ENCODE measurements at regions of chr12 and their contacts with region 1.

Region 1: GRCh38 chr12:123580772-123581171 is 3.6 kb upstream of the TMED2 start:
- DNase-seq: no peak

Region 2: DNA sequence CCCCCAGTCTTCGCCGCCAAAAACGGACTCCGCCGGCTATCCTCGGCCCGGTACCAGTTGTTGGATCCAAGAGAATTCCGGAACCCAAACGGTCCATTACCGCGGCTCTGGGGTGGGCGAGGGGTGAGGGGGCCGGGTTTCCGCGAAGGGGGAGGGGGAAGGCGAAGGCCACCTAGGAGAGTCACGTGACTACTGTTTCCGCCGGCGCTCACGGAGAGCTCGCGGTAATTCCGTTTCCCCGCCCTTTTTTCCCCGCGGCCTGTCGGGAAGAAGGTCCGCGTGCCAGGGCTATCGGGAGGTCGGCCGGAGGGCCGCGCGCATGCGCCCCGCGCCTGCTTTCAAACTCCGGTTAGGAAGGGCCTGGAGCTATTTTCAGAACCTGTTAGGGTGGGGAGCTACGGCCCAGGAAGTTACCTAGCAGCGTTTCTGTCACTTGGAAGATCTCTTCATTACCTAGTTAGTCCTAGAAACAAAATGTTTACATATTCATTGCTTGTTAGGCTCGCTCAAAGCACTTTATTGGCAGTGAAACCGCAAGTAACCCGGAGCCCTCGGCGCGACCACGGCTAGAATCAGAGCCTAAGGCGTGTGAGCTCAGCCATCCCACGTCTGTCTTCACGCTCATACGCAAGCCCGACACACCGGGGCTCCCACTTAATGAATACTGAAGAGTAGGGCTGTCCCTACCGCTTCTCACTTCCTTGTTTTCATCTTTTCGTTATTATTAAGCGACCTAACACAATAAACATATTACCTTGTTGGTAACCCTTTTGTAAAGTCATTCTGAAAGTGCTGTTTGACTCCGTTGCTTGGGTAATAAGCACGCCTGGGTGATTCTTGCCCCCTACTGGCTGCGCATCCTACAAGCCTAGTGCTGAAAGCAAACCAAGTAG is 215.5 kb before region 1 on chr12:
- intact Hi-C with region 1: loop called (anchors 5 kb)
- DNase-seq: peak; percentile 99

Region 3: DNA sequence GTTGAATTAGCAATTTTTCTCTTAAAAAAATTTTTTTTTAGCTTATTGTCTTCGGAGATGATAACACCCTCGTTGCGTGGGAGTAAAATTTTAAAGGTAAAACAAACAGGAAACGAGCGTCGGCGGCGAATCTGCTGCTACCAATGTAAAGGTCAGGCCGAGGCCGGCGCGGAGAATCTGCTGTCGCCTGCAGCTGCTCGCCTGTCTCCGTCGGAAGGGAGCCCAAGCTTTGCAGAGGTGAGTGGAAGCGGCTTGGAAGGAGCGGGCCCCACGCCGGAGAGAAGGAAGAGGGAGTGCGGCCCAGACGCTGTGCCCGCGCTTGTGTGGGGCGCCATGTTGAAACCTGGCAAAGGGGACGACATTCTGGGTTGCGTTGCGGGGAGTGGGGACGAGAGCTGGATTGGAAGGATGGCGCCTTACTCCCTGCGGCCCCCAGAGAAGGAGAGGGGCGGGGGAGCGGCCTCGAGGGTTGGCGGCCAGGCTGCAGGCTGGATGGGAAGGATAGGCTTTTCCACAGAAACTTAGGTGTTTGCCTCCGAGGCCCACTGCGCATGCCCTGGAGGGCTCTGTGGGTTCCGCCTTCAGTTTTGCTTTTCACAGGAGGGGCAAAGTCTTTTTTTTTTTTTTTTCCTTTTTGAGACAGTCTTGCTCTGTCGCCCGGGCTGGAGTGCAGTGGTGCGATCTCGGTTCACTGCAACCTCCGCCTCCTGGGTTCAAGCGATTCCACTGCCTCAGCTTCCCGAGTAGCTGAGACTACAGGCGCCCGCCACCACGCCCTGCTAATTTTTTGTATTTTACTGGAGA is 122.6 kb before region 1 on chr12 and contains the start of gene SNRNP35:
- intact Hi-C with region 1: loop called (anchors 5 kb)
- DNase-seq: peak; percentile 92
- total RNA-seq, gene SNRNP35: 24.3 TPM

Region 4: GRCh38 chr12:123494124-123494851 is 86.5 kb before region 1 on chr12:
- intact Hi-C with region 1: no loop called
- DNase-seq: no peak